ENCODE measurements at regions of chr10 and their contacts with region 1.

Region 1: GRCh38 chr10:31197886-31198285 is 121.1 kb upstream of the ZEB1 start:
- DNase-seq: no peak
- ATAC-seq: no peak
- H3K4me3 ChIP-seq: no peak overlapping the region
- H3K27ac ChIP-seq: no peak overlapping the region
- H3K4me1 ChIP-seq: no peaks in the 10 kb centered on the region
- H3K27me3 ChIP-seq: no peaks in the 10 kb centered on the region
- CTCF ChIP-seq: no peak
- EP300 ChIP-seq: no peak
- POLR2A ChIP-seq: no peak
- RAD21 ChIP-seq: no peak

Region 2: DNA sequence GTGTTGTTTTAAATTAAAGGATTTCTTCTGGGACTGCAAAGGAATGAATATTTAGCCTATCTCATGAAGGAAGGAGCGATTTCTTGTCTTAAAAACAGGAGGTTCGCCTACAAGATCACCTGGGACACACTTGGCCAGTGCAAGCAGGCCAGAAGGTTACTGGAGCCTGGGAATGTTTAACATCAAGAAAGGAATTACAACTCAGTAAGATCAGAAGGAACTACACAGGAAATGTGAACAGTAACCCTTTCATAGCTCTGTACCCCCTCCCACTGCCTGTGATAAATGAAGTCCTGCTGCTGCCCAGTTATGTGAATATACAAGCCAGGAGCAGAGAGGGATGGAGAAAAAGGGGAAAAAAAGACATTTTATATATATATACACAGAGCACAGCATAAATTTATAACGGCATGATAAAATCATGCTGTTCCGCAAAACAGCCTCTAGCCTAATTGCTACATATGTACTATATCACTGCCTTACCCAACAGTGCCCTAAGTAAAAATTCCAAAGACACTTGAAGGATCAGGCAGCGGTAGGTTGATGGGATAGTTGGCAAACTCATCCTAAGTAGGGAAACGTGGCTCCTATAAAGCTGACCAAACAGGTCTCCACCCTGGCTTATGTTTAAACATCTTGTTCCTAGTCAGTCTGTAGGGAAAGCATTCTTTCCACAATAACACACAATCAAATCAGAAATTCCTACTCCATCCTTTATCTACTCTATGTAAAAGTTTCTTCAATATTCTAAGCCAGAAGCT is 230.1 kb before region 1 on chr10:
- CTCF ChIA-PET with region 1: no interaction called
- POLR2A ChIA-PET with region 1: no interaction called
- RAD21 ChIA-PET with region 1: no interaction called
- SMC1A ChIA-PET with region 1: no interaction called
- in situ Hi-C with region 1: no loop called
- intact Hi-C with region 1: no loop called
- DNase-seq: no peak
- ATAC-seq: no peak
- H3K4me3 ChIP-seq: no peak overlapping the region
- H3K27ac ChIP-seq: no peak overlapping the region
- H3K4me1 ChIP-seq: no peaks in the 10 kb centered on the region
- H3K27me3 ChIP-seq: no peaks in the 10 kb centered on the region
- CTCF ChIP-seq: no peak
- EP300 ChIP-seq: no peak
- POLR2A ChIP-seq: no peak
- RAD21 ChIP-seq: no peak

Region 3: DNA sequence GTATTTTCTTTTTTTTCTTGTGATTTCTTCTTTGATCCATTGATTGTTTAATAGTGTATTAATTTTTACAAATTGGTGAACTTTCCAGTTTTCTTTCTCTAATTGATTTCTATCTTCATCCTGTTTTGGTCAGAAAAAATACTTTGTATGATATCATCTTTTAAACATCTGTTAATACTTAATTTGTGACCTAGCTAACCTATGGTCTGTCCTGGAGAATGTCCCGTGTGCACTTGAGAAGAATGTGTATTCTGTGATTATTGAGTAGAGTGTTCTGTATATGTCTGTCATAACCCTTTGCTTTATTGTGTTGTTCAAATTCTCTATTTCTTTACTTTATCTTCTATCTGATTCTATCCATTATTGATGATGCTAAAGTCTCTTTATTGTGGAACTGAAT is 55.4 kb after region 1 on chr10:
- CTCF ChIA-PET with region 1: no interaction called
- POLR2A ChIA-PET with region 1: no interaction called
- RAD21 ChIA-PET with region 1: no interaction called
- SMC1A ChIA-PET with region 1: no interaction called
- in situ Hi-C with region 1: no loop called
- intact Hi-C with region 1: loop called (anchors 10 kb)
- DNase-seq: no peak
- ATAC-seq: no peak
- H3K4me3 ChIP-seq: no peak overlapping the region
- H3K27ac ChIP-seq: no peak overlapping the region
- H3K4me1 ChIP-seq: no peaks in the 10 kb centered on the region
- H3K27me3 ChIP-seq: no peaks in the 10 kb centered on the region
- CTCF ChIP-seq: no peak
- EP300 ChIP-seq: no peak
- POLR2A ChIP-seq: no peak
- RAD21 ChIP-seq: no peak

Region 4: GRCh38 chr10:31340343-31340742 is 142.5 kb after region 1 on chr10:
- CTCF ChIA-PET with region 1: no interaction called
- POLR2A ChIA-PET with region 1: no interaction called
- RAD21 ChIA-PET with region 1: no interaction called
- SMC1A ChIA-PET with region 1: no interaction called
- in situ Hi-C with region 1: no loop called
- intact Hi-C with region 1: no loop called
- DNase-seq: no peak
- ATAC-seq: peak; percentile 36
- H3K4me3 ChIP-seq: no peak overlapping the region; the same call in 1 of the 2 replicates
- H3K27ac ChIP-seq: peak overlapping the region; percentile 43; the same call in 1 of the 2 replicates
- H3K4me1 ChIP-seq: peaks cover 25% of the 10 kb centered on the region
- H3K27me3 ChIP-seq: no peaks in the 10 kb centered on the region
- CTCF ChIP-seq: no peak
- EP300 ChIP-seq: no peak
- POLR2A ChIP-seq: no peak
- RAD21 ChIP-seq: no peak

Region 5: GRCh38 chr10:31508882-31509281 is 311.0 kb after region 1 on chr10:
- CTCF ChIA-PET with region 1: no interaction called
- POLR2A ChIA-PET with region 1: no interaction called
- RAD21 ChIA-PET with region 1: no interaction called
- SMC1A ChIA-PET with region 1: no interaction called
- in situ Hi-C with region 1: no loop called
- intact Hi-C with region 1: no loop called
- DNase-seq: no peak
- ATAC-seq: no peak
- H3K4me3 ChIP-seq: no peak overlapping the region
- H3K27ac ChIP-seq: no peak overlapping the region
- H3K4me1 ChIP-seq: no peaks in the 10 kb centered on the region
- H3K27me3 ChIP-seq: no peaks in the 10 kb centered on the region
- CTCF ChIP-seq: no peak
- EP300 ChIP-seq: no peak
- POLR2A ChIP-seq: no peak
- RAD21 ChIP-seq: no peak

Measured in GM12878 (cell line).